Activated CD4-positive, alpha-beta memory T cell treated with anti-CD3 and anti-CD28 coated beads for 36 hours (primary cell): ENCODE measurements at regions of chr2 and their contacts with region 1.

Region 1: GRCh38 chr2:9205963-9206948 is at the start of gene ASAP2:
- DNase-seq: peak; percentile 61
- H3K4me3 Mint-ChIP-seq: peak within 1 kb of the TSS; percentile 59
- H3K27ac Mint-ChIP-seq: no peak within 1 kb of the TSS
- H3K4me1 Mint-ChIP-seq: peaks cover 4% of the 10 kb centered on the region
- H3K27me3 Mint-ChIP-seq: peaks cover 43% of the 10 kb centered on the region
- total RNA-seq, gene ASAP2: 0.26 to 0.97 TPM

Region 2: DNA sequence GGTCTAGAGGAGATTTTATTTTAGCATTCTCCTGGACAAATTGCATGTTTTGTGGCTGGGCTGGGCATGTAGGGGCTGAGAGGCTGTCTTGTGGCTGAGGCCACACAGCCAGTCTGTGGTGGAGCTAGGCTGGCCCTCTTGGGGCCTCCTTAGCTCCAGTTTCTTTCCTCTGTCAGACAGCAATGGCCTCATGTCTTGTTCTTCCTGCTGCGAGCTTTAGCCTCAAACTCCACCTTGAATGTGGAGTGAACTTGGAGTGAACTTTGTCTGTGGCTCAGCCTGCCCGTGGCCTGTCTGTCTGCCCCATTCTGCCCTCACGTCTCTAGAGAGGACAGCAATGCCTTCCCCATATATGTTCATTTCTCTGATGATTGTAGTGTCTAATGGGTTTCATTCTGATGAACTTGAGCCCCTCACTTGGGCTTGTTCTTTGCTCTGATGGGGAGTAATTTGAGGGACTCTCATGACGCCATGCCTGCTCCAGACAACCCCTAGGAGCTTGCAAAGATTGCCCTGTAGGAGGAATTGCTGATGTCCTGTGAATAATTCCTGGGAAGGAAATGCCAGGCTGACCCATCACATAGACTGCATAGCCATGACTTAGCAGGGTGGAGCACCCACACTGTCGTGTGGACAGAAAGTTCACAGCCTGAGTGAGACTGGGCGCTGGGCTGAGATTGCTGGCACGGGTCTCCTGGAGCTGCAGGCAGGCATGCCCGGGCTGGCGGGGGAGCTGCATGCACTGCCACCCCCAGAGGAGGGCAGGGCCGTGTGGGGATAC is 43.0 kb after region 1 on chr2:
- CTCF ChIA-PET with region 1: interaction called, 4 read pairs
- POLR2A ChIA-PET with region 1: no interaction called
- intact Hi-C with region 1: loop called (anchors 5 kb)
- DNase-seq: no peak
- H3K4me3 Mint-ChIP-seq: no peak overlapping the region
- H3K27ac Mint-ChIP-seq: no peak overlapping the region
- H3K4me1 Mint-ChIP-seq: peaks cover 2% of the 10 kb centered on the region
- H3K27me3 Mint-ChIP-seq: peaks cover 5% of the 10 kb centered on the region

Region 3: DNA sequence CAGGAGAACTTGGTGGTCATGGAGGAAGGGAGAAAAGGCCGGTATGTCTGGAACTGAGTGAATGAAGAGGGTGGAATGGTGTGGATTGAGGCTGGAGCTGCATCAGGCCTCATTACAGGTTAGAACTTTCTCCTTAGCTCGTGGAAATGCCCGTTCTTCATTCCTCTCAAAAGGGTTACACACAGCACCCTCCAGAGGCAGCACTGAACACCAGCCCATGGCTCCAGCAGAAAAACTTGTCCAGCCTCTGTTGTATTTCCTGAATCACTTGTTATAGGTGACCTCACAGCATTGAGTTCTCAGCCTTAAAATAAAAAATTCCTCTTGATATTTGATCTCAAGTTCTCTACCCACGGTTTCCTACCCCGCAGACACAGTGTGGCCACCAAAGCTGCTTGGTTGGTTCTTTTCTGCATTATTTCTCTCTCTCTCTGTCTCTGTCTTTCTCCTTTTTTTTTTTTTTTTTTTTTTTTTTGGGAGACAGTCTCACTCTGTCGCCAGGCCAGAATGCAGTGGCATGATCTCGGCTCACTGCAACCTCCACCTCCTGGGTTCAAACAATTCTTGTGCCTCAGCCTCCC is 127.4 kb after region 1 on chr2:
- CTCF ChIA-PET with region 1: no interaction called
- POLR2A ChIA-PET with region 1: no interaction called
- intact Hi-C with region 1: loop called (anchors 5 kb)
- DNase-seq: peak; percentile 34
- H3K4me3 Mint-ChIP-seq: no peak overlapping the region
- H3K27ac Mint-ChIP-seq: no peak overlapping the region
- H3K4me1 Mint-ChIP-seq: peaks cover 3% of the 10 kb centered on the region
- H3K27me3 Mint-ChIP-seq: peaks cover 2% of the 10 kb centered on the region

Region 4: GRCh38 chr2:9373077-9373875 is 167.0 kb after region 1 on chr2:
- CTCF ChIA-PET with region 1: interaction called, 5 read pairs
- POLR2A ChIA-PET with region 1: no interaction called
- intact Hi-C with region 1: loop called (anchors 5 kb)
- DNase-seq: no peak
- H3K4me3 Mint-ChIP-seq: no peak overlapping the region
- H3K27ac Mint-ChIP-seq: no peak overlapping the region
- H3K4me1 Mint-ChIP-seq: peaks cover 20% of the 10 kb centered on the region
- H3K27me3 Mint-ChIP-seq: peaks cover 9% of the 10 kb centered on the region